Transverse colon (tissue), 4 donors: ENCODE measurements at regions of chr3 and their contacts with region 1.

Region 1: GRCh38 chr3:9196020-9196419 is 53.4 kb downstream of the SRGAP3 start:
- DNase-seq: no peak
- H3K4me3 ChIP-seq: no peak overlapping the region
- H3K27ac ChIP-seq: no peak overlapping the region
- H3K4me1 ChIP-seq: no peaks in the 10 kb centered on the region
- H3K27me3 ChIP-seq: no peaks in the 10 kb centered on the region
- CTCF ChIP-seq: no peak
- EP300 ChIP-seq: no peak
- POLR2A ChIP-seq: no peak

Region 2: GRCh38 chr3:8443829-8444791 is 751.9 kb before region 1 on chr3:
- in situ Hi-C with region 1: no loop called
- intact Hi-C with region 1: no loop called
- DNase-seq: peak; percentile 88
- H3K4me3 ChIP-seq: no peak overlapping the region
- H3K27ac ChIP-seq: peak overlapping the region; percentile 71 to 84 (median 74)
- H3K4me1 ChIP-seq: peaks cover 0 to 34% (median 21%) of the 10 kb centered on the region in 4 donors
- H3K27me3 ChIP-seq: no peaks in the 10 kb centered on the region
- CTCF ChIP-seq: peak in 1 of 5 experiments; percentile 13
- EP300 ChIP-seq: no peak
- POLR2A ChIP-seq: peak; percentile 24

Region 3: DNA sequence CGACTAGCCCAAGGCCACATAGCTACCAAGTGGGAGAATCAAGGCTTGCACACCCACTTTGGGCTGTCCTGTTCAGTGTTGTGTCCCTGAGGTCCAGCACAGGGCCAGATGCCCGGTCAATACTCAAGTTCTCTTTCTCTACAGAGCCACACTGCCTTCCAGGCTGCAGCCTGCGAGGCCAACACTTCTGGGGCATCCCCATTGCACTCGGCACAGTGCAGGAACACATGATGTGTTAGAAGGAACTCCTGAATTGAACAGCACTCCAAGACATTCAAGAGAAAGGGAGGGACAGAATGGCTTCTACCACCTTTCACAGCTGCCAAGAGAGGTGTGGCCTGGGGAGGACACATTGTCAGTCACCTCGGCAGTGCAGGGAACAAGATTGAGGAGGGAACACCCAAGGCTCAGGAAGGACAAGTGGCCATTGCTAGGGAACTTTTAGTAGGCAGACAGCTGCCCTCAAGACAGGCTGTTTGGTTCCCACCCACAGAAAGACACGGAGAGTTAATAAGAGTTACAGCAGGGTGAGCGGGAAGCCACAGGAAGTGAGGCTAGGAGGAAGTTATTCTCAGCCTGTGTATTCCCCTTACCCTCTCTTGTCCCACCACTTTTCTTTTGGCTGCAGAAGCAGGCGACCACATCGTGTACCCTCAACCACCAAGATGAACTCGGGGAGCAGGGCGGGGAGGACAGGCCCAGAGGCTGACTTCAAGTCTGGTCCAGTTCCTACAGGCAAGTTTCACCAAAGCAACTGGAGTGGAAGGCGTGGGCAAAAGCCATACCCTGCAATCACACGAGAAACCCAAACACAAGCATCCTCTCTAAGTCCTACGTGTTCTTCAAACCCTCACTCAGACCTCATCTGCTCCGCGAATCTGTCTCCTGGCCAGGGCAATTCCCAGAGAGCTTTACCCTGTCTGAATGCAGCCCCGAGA is 15.9 kb before region 1 on chr3:
- in situ Hi-C with region 1: no loop called
- intact Hi-C with region 1: loop called (anchors 2 kb)
- DNase-seq: no peak
- H3K4me3 ChIP-seq: no peak overlapping the region
- H3K27ac ChIP-seq: peak overlapping the region in 1 of 4 donors; percentile 37
- H3K4me1 ChIP-seq: no peaks in the 10 kb centered on the region
- H3K27me3 ChIP-seq: no peaks in the 10 kb centered on the region
- CTCF ChIP-seq: no peak
- EP300 ChIP-seq: no peak
- POLR2A ChIP-seq: no peak